Caco-2 (cell line): ENCODE measurements at regions of chr10 and their contacts with region 1.

Region 1: GRCh38 chr10:59625721-59626522 is 83.7 kb downstream of the SLC16A9 start:
- DNase-seq: peak; percentile 77 to 86
- H3K4me3 ChIP-seq: no peak overlapping the region
- H3K4me3 Mint-ChIP-seq: no peak overlapping the region
- H3K27ac Mint-ChIP-seq: no peak overlapping the region
- H3K4me1 ChIP-seq: peaks cover 3% of the 10 kb centered on the region; the same call in 1 of the 2 replicates
- H3K4me1 Mint-ChIP-seq: peaks cover 6% of the 10 kb centered on the region
- H3K27me3 ChIP-seq: no peaks in the 10 kb centered on the region
- H3K27me3 Mint-ChIP-seq: peaks cover 3% of the 10 kb centered on the region
- CTCF ChIP-seq: peak; percentile 95 to 97

Region 2: DNA sequence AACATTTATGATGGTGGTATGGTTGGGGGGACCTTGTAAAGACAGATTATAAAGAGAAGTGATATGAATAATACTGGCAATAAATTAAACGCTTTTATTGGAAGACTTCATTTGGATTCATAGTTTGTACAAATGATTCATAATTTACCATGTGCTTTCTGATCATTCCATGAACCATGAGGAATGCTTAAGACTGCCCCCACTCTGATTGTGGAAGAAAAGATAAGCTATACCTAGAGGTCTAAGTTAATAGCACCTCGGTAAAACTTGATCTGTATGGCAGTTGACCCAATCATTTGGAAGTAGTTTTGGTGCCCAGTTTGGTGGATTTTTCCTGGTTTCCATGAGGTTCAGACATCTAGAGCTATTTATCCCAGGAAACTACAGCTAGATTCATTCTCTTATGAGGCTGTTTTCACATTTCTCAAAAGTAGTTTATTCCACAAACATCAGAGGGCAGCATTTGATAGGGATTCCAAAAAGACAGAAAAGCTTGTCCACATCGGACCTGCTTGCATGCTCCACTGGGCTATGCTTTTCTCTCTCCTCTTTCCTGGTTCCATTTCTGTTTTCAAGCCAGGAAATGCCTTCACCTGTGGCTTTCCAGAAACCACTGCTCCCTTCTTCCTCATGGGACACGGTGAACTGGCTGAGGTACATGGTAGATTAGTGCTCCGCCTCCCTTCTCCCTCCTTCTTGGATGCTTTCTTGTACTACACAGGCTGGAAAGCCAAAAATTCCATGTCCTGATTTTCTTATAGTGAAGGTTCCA is 1211.5 kb before region 1 on chr10:
- CTCF ChIA-PET with region 1: no interaction called
- POLR2A ChIA-PET with region 1: no interaction called
- intact Hi-C with region 1: loop called (anchors 5 kb)
- DNase-seq: peak; percentile 59 to 85
- H3K4me3 ChIP-seq: no peak overlapping the region
- H3K4me3 Mint-ChIP-seq: no peak overlapping the region
- H3K27ac Mint-ChIP-seq: peak overlapping the region; percentile 38
- H3K4me1 ChIP-seq: peaks cover 35% of the 10 kb centered on the region
- H3K4me1 Mint-ChIP-seq: peaks cover 37% of the 10 kb centered on the region
- H3K27me3 ChIP-seq: no peaks in the 10 kb centered on the region
- H3K27me3 Mint-ChIP-seq: no peaks in the 10 kb centered on the region
- CTCF ChIP-seq: peak; percentile 57 to 84

Region 3: DNA sequence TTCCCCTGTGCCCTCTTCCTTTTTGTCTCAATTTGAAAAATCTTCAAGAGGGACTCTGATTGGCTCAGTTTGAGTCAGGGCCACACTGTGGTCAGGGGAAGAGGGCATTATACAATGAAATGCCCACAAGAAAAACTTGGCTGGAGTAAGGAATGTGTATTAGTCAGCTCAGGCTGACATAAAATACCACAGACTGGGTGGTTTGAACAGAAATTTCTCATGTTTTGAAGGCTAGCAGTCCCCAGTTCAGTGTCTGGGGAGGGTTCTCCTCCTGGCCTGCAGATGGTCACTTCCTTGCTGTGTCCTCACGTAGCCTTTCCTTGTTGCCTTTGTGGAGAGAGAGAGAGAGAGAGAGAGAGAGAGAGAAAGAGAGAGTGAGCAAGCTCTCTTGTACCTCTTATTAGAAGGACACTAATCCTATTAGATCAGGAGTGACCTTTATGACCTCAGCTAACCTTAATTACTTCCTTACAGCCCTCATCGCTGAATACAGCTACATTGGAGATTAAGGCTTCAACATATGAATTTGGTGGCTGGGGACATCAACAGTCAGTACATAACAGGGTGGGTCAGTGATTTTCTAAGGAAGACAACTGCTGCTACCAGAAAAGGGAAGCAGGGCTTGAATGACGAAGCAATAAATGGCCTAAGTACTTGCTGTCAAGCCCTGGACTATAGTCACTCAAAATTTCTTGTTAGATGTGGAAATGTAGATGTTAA is 237.8 kb before region 1 on chr10:
- CTCF ChIA-PET with region 1: no interaction called
- POLR2A ChIA-PET with region 1: no interaction called
- intact Hi-C with region 1: loop called (anchors 1 kb)
- DNase-seq: no peak
- H3K4me3 ChIP-seq: no peak overlapping the region
- H3K4me3 Mint-ChIP-seq: no peak overlapping the region
- H3K27ac Mint-ChIP-seq: no peak overlapping the region
- H3K4me1 ChIP-seq: no peaks in the 10 kb centered on the region
- H3K4me1 Mint-ChIP-seq: no peaks in the 10 kb centered on the region
- H3K27me3 ChIP-seq: no peaks in the 10 kb centered on the region
- H3K27me3 Mint-ChIP-seq: peaks cover 8% of the 10 kb centered on the region
- CTCF ChIP-seq: no peak

Region 4: DNA sequence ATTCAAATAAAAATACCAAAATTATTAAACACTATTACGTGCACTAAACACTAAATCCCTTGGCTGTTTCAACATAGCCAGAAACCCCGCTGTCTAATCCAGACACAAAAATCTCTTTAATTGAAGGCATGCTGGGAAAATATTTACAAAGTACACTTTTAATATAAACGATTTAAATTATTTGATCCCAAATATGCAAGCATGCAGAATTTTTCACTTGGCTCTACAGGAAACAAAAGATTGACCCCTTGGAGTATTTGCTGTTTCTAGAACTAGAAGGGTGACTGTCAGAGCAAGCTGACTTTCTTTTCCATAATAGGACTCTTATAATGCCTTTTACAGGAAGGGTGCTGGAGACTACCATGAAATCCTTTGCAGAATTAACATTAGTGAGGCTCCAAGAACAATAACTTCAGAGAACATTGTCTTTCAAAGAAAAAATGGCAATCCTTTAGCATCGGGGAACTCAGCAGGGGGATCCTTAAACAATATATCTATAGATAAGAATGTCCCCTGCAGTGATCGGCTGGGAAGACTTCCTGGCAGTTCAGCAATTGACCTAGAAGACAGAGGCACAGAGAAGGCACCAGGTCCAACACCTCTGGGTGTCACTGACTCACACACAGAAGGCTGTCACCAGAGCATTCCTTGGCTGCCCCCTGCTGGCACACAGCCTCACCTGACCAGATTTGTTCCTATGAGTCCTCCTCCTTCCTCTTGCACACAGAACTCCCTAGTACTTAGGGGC is 183.1 kb after region 1 on chr10:
- CTCF ChIA-PET with region 1: interaction called, 3 read pairs
- POLR2A ChIA-PET with region 1: no interaction called
- intact Hi-C with region 1: loop called (anchors 1 kb)
- DNase-seq: peak; percentile 84 to 90
- H3K4me3 ChIP-seq: no peak overlapping the region
- H3K4me3 Mint-ChIP-seq: no peak overlapping the region
- H3K27ac Mint-ChIP-seq: no peak overlapping the region
- H3K4me1 ChIP-seq: no peaks in the 10 kb centered on the region
- H3K4me1 Mint-ChIP-seq: no peaks in the 10 kb centered on the region
- H3K27me3 ChIP-seq: no peaks in the 10 kb centered on the region
- H3K27me3 Mint-ChIP-seq: no peaks in the 10 kb centered on the region
- CTCF ChIP-seq: peak; percentile 87 to 92

Region 5: DNA sequence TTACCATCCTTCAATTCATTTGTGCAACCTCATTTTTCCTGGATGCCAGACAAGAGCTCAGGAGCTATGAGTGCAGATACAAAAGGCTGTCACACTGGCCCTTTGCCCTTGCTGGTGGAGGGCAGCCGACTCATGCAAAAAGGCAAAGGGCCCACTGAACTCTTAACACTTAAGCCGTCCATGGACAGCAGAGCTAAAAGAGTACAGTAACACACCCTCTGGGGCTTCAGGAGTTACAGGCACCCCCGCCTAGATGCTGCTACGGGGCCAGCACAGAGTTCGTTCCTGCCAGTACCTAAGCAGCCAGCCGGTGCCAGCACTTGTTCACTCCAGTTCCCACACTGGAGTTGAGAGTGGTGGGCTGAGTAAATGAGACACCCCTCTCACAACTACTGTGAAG is 197.2 kb after region 1 on chr10:
- CTCF ChIA-PET with region 1: no interaction called
- POLR2A ChIA-PET with region 1: no interaction called
- intact Hi-C with region 1: no loop called
- DNase-seq: no peak
- H3K4me3 ChIP-seq: no peak overlapping the region
- H3K4me3 Mint-ChIP-seq: no peak overlapping the region
- H3K27ac Mint-ChIP-seq: no peak overlapping the region
- H3K4me1 ChIP-seq: no peaks in the 10 kb centered on the region
- H3K4me1 Mint-ChIP-seq: no peaks in the 10 kb centered on the region
- H3K27me3 ChIP-seq: no peaks in the 10 kb centered on the region
- H3K27me3 Mint-ChIP-seq: no peaks in the 10 kb centered on the region
- CTCF ChIP-seq: no peak

Region 6: GRCh38 chr10:60032723-60033122 is 406.8 kb after region 1 on chr10:
- CTCF ChIA-PET with region 1: interaction called, 4 read pairs
- POLR2A ChIA-PET with region 1: no interaction called
- intact Hi-C with region 1: loop called (anchors 1 kb)
- DNase-seq: peak; percentile 68 to 82
- H3K4me3 ChIP-seq: no peak overlapping the region
- H3K4me3 Mint-ChIP-seq: no peak overlapping the region
- H3K27ac Mint-ChIP-seq: no peak overlapping the region
- H3K4me1 ChIP-seq: peaks cover 11% of the 10 kb centered on the region; the same call in 1 of the 2 replicates
- H3K4me1 Mint-ChIP-seq: peaks cover 9% of the 10 kb centered on the region
- H3K27me3 ChIP-seq: no peaks in the 10 kb centered on the region
- H3K27me3 Mint-ChIP-seq: no peaks in the 10 kb centered on the region
- CTCF ChIP-seq: peak; percentile 79 to 86

Region 7: GRCh38 chr10:60208676-60209269 is 582.9 kb after region 1 on chr10:
- CTCF ChIA-PET with region 1: no interaction called
- POLR2A ChIA-PET with region 1: no interaction called
- intact Hi-C with region 1: loop called (anchors 1 kb)
- DNase-seq: peak in 1 of 2 experiments; percentile 63
- H3K4me3 ChIP-seq: no peak overlapping the region
- H3K4me3 Mint-ChIP-seq: no peak overlapping the region
- H3K27ac Mint-ChIP-seq: no peak overlapping the region
- H3K4me1 ChIP-seq: peaks cover 10% of the 10 kb centered on the region; the same call in 1 of the 2 replicates
- H3K4me1 Mint-ChIP-seq: peaks cover 24% of the 10 kb centered on the region
- H3K27me3 ChIP-seq: no peaks in the 10 kb centered on the region
- H3K27me3 Mint-ChIP-seq: no peaks in the 10 kb centered on the region
- CTCF ChIP-seq: peak; percentile 96